T-cell (primary cell): ENCODE measurements at regions of chr17 and their contacts with region 1.

Region 1: DNA sequence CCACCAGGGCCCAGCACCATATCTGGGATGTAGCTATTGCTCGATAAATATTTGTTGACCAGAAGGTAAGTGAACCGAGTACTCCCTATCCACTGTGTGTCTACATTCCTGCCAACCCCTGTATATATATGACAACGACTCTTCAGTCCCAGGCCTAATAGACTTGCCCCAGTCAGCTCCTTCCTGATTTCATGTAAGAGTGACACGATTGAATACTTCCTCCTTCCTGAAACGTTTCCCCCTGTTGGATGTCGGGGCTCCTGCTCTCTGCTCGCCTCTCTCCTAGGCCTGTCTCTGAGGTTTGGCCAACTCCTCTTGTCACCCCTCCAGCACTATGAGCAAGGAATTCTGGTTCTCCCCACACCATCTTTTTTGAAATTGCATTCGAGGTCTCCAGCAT is 178.9 kb downstream of the PRKCA start:
- DNase-seq: no peak
- ATAC-seq: no peak
- H3K4me3 ChIP-seq: no peak overlapping the region
- H3K4me3 Mint-ChIP-seq: no peak overlapping the region
- H3K27ac ChIP-seq: no peak overlapping the region
- H3K27ac Mint-ChIP-seq: no peak overlapping the region
- H3K4me1 ChIP-seq: no peaks in the 10 kb centered on the region
- H3K4me1 Mint-ChIP-seq: peaks cover 31 to 47% (median 44%) of the 10 kb centered on the region in 3 donors
- H3K27me3 ChIP-seq: no peaks in the 10 kb centered on the region
- H3K27me3 Mint-ChIP-seq: no peaks in the 10 kb centered on the region

Region 2: DNA sequence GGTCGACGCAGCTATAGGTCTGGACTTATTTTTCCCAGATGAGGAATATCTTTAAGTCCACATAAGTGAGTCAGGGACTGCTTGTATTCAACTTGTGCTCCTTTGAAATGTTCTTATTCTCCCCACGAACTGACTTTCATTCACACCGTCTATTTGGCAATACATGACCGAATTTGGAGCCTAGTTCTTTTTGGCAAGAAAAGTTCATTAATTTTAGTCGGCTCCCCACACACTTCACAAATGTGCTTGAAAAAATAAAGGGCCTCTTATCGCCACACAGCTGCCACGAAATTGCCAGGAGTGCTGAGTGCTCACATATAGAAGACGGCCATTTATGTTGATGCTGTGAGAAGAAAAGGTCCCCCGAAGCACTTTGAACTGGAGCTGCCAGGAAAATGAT is 26.2 kb before region 1 on chr17:
- CTCF ChIA-PET with region 1: no interaction called
- POLR2A ChIA-PET with region 1: no interaction called
- DNase-seq: no peak
- ATAC-seq: no peak
- H3K4me3 ChIP-seq: no peak overlapping the region
- H3K4me3 Mint-ChIP-seq: no peak overlapping the region
- H3K27ac ChIP-seq: no peak overlapping the region
- H3K27ac Mint-ChIP-seq: no peak overlapping the region
- H3K4me1 ChIP-seq: peaks cover 8% of the 10 kb centered on the region in 2 experiments
- H3K4me1 Mint-ChIP-seq: peaks cover 37 to 51% (median 40%) of the 10 kb centered on the region in 3 donors
- H3K27me3 ChIP-seq: no peaks in the 10 kb centered on the region
- H3K27me3 Mint-ChIP-seq: no peaks in the 10 kb centered on the region

Region 3: DNA sequence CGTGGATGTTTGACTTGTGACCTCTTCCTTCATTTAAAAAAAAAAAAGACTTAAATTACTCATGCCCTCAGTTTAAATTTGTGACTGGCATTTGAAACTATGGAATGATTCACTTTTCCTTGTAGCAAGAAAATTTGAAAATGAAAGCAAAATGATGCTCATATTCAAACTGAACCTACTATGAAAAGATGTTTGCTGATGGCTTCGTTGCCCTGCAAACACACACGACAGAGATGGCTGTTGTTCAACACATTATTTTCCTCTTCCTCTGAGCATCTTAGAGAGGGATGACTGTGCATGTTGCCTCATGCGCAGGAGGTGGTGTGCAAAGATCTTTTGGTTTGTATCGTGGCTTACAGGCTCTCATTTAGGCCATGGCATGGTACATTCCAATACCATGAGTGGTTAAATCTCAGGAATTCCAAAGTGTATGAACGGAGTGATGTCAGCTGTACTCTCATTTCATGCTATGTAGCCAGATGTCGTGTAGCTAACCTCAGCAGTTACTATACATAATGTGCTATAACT is 14.4 kb before region 1 on chr17:
- CTCF ChIA-PET with region 1: interaction called in 1 of 2 experiments, 3 read pairs
- POLR2A ChIA-PET with region 1: interaction called in 1 of 2 experiments, 11 read pairs
- DNase-seq: no peak
- ATAC-seq: peak in 3 of 4 experiments; percentile 29 to 47 (median 45)
- H3K4me3 ChIP-seq: no peak overlapping the region
- H3K4me3 Mint-ChIP-seq: peak overlapping the region in 2 of 3 donors; percentile 49 to 53
- H3K27ac ChIP-seq: no peak overlapping the region
- H3K27ac Mint-ChIP-seq: peak overlapping the region; percentile 9 to 62
- H3K4me1 ChIP-seq: peaks cover 5 to 32% of the 10 kb centered on the region in 2 experiments
- H3K4me1 Mint-ChIP-seq: peaks cover 80 to 88% (median 83%) of the 10 kb centered on the region in 3 donors
- H3K27me3 ChIP-seq: no peaks in the 10 kb centered on the region
- H3K27me3 Mint-ChIP-seq: no peaks in the 10 kb centered on the region

Region 4: GRCh38 chr17:66508896-66509843 is 27.9 kb after region 1 on chr17:
- CTCF ChIA-PET with region 1: no interaction called
- POLR2A ChIA-PET with region 1: no interaction called
- DNase-seq: peak in 3 of 35 experiments; percentile 6 to 32 (median 18)
- ATAC-seq: peak in 3 of 4 experiments; percentile 77 to 85 (median 80)
- H3K4me3 ChIP-seq: no peak overlapping the region
- H3K4me3 Mint-ChIP-seq: peak overlapping the region; percentile 25 to 67 (median 32)
- H3K27ac ChIP-seq: no peak overlapping the region
- H3K27ac Mint-ChIP-seq: peak overlapping the region; percentile 75 to 91
- H3K4me1 ChIP-seq: peaks cover 0 to 9% of the 10 kb centered on the region in 2 experiments
- H3K4me1 Mint-ChIP-seq: peaks cover 70 to 78% (median 72%) of the 10 kb centered on the region in 3 donors
- H3K27me3 ChIP-seq: no peaks in the 10 kb centered on the region
- H3K27me3 Mint-ChIP-seq: no peaks in the 10 kb centered on the region

Region 5: DNA sequence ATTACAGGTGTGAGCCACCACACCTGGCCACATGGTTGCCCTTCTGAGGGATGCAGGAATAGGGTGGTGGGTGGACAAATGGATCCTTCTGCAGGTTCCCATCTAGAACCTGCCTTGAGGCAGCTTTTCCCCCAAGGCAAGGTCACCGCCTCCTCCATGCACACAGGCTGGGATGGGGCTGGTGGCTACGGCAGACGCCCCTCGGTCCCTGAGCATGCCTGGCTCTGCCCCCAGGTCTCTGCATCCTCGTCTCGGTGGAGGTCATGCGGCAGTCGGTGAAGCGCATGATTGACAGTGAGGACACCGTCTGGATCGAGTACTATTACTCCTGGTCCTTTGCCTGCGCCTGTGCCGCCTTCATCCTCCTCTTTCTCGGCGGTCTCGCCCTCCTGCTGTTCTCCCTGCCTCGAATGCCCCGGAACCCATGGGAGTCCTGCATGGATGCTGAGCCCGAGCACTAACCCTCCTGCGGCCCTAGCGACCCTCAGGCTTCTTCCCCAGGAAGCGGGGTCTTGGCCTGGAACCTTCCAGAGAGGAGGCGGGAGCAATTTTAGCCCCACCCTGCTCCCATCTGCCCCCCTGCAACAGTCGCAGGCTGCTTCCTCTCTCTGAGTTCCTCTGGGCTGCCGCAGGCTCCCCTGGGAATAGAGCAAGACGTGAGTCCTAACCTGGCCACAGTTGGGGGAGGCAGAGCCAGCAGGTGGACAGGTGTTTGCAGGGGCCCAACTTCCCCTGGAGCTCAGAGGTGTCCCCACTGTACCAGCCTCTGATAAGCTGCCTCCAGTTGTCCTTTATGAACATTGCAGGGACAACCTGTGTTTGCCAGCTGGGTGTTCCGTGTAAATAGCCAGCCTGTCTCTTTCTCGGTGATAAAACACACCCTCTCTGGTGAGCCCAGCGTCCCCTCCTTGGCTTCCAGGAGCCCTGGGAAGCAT is 574.8 kb after region 1 on chr17:
- CTCF ChIA-PET with region 1: no interaction called
- POLR2A ChIA-PET with region 1: no interaction called
- DNase-seq: no peak
- ATAC-seq: no peak
- H3K4me3 ChIP-seq: no peak overlapping the region
- H3K4me3 Mint-ChIP-seq: no peak overlapping the region
- H3K27ac ChIP-seq: no peak overlapping the region
- H3K27ac Mint-ChIP-seq: no peak overlapping the region
- H3K4me1 ChIP-seq: no peaks in the 10 kb centered on the region
- H3K4me1 Mint-ChIP-seq: no peaks in the 10 kb centered on the region
- H3K27me3 ChIP-seq: no peaks in the 10 kb centered on the region
- H3K27me3 Mint-ChIP-seq: no peaks in the 10 kb centered on the region